Mammary epithelial cell (primary cell): ENCODE measurements at regions of chr3 and their contacts with region 1.

Region 1: DNA sequence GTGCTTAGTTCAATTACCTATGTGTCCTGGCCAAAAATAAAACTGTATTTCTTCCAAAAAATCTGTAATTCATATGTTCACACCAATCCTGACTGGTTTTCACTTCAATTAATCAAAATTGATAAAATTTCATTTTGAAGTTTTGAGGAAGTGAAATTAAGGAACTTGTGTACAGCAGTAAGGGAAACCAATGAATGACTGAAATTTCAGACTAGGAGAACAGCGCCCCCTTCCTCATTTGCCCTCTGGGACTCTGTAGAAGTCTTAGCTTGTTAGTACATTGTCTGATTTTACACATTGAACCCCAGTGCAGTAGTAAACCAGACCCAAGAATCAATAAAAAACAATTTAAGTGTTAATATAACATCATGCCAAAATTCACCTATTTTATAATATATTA is 495.3 kb upstream of the AGTR1 start:
- DNase-seq: no peak
- H3K4me3 ChIP-seq: no peak overlapping the region
- H3K27ac ChIP-seq: no peak overlapping the region
- H3K4me1 ChIP-seq: no peaks in the 10 kb centered on the region
- H3K27me3 ChIP-seq: no peaks in the 10 kb centered on the region
- CTCF ChIP-seq: peak in 1 of 2 donors; percentile 20

Region 2: DNA sequence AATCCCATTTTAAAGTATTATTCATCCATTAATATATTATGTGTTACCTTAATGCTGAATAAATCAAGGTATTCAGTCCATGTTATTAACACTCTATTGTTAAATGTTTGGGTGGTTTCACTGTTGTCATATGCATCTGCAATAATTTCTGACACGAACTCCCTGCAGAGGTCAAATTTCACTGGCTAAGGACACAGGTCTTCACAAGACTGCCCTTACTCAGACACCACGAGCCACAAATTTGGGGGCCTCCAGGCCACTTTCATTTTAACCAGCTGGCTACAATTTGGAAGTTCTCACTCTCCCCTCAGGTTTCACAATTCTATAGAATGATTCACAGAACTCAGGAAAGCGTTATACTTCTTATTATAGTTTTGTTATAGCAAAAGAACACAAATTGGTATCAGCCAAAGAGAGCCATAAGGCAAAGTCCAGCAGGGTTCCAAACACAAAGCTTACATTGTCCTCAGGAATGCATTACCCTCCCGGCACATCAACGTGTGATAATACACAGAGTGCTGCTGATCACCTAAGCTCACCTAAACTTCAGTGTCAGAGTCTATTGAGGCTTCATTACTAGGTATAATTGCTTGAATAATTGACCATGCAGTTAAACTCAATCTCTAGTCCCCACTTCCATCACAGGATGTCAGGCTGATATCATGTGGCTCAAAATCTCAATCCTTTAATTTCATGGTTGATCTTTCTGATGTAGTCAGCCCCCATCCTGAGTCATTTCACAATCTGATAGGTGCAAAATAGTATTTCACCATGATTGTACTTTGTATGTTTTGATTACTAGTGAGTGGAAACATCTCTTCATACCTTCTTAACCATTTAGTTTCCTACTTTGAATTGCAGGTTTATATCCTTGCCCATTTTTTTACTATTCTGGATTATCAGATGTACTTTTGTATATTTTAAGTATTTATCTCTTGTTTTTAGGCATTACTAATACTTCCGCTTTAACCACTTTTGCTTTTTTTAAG is 53.9 kb after region 1 on chr3:
- CTCF ChIA-PET with region 1: no interaction called
- dilution Hi-C with region 1: loop called (anchors 5 kb)
- in situ Hi-C with region 1: no loop called
- intact Hi-C with region 1: no loop called
- DNase-seq: peak; percentile 1
- H3K4me3 ChIP-seq: no peak overlapping the region
- H3K27ac ChIP-seq: no peak overlapping the region
- H3K4me1 ChIP-seq: no peaks in the 10 kb centered on the region
- H3K27me3 ChIP-seq: no peaks in the 10 kb centered on the region
- CTCF ChIP-seq: no peak